KBM-7 (cell line): ENCODE measurements at regions of chr1 and their contacts with region 1.

Region 1: GRCh38 chr1:196372896-196373536 is 235.2 kb downstream of the KCNT2 start:
- DNase-seq: peak; percentile 29

Region 2: DNA sequence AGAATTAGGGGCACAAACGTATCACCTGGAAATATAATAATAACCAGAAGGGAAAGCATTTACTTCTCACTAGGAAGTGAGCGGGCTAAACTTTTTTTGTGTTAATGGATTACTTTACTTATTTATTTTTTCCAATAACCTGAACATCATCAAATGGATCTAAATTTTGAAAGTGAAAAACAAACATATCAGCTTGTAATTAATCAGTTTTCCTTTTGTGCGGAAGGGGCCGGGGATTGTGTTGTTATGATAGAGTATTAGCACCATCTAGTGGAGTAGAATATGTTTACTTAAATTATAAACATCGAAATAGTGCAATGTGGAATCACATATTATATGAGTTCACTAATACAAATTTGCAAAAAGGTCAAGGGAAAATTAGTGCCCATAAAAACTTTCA is 287.8 kb after region 1 on chr1:
- in situ Hi-C with region 1: loop called (anchors 25 kb)
- DNase-seq: peak; percentile 71